CD4-positive, alpha-beta memory T cell (primary cell): ENCODE measurements at regions of chr19 and their contacts with region 1.

Region 1: DNA sequence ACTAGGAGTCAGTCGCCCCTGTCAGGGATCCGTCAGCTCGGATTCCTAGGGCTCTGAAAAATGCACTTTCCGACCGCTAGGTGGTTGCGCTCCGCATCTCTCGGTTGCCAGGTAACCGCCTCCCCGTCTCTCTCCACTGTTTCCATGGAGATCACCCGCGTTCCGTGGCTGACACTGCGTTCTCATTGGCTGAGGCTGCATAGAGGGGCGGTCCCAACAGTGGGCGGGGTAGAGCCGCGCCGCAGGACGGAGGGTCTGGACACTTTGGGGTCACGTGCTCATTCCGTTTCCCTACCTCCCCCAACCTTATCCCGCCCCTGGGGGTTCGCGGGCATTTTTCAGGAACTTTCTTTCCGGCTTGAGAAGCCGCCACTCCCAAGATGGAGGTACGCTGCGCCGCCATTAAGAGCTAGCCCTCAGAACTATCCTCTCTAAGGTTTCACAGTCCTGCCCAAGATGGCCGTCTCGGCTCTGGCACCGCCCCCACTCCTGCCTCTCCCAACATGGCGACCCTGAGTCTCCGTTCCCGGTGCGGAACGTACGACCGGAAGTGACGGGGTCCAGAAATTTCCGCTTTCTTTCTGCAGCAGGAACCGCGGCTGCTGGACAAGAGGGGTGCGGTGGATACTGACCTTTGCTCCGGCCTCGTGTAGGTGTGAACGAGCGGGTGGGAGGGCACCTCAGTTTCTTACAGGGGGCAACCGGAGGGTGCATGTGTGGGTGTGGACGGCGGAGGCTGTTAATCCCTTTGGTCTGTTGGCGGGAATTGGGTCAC is at the starts of genes ODAD3 and PRKCSH:
- DNase-seq: peak; percentile 99
- H3K4me3 ChIP-seq: peak within 1 kb of the TSS; percentile 95 to 97
- H3K4me3 Mint-ChIP-seq: peak within 1 kb of the TSS; percentile 97 to 100 (median 99)
- H3K27ac ChIP-seq: peak within 1 kb of the TSS; percentile 74
- H3K27ac Mint-ChIP-seq: peak within 1 kb of the TSS; percentile 95 to 100 (median 98)
- H3K4me1 ChIP-seq: peaks cover 19% of the 10 kb centered on the region
- H3K4me1 Mint-ChIP-seq: peaks cover 14 to 31% (median 23%) of the 10 kb centered on the region in 4 donors
- H3K27me3 ChIP-seq: no peaks in the 10 kb centered on the region
- H3K27me3 Mint-ChIP-seq: peaks cover 2 to 3% of the 10 kb centered on the region in 2 donors
- total RNA-seq, gene ODAD3: not detected
- total RNA-seq, gene PRKCSH: 300 TPM

Region 2: DNA sequence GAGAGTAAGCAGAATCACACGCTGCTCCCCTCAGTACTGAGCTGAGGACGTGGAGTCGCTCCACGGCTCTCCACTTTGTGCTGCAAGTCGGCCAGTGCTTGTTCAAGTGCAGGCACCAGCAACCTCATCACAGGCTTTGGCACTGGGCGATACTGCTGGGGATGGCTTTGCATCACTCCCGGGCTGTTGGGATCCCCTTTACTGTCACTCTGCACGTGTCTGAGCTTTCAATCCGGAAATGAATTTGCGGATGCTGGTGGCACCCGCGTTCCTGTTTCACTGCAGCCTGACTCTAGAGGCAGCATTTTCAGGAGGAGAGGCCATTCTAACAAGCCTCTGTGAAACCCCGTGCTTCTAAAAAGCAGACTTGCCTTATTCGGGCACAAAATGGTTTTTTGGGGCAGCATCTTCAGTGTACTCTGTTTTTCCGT is 455.3 kb before region 1 on chr19:
- CTCF ChIA-PET with region 1: no interaction called
- POLR2A ChIA-PET with region 1: no interaction called
- intact Hi-C with region 1: no loop called
- DNase-seq: peak in 2 of 5 donors; percentile 6 to 19
- H3K4me3 ChIP-seq: no peak overlapping the region
- H3K4me3 Mint-ChIP-seq: peak overlapping the region in 6 of 8 donors; percentile 29 to 60 (median 50)
- H3K27ac ChIP-seq: no peak overlapping the region
- H3K27ac Mint-ChIP-seq: peak overlapping the region in 6 of 7 donors; percentile 36 to 76 (median 70)
- H3K4me1 ChIP-seq: no peaks in the 10 kb centered on the region
- H3K4me1 Mint-ChIP-seq: peaks cover 14 to 27% (median 21%) of the 10 kb centered on the region in 4 donors
- H3K27me3 ChIP-seq: no peaks in the 10 kb centered on the region
- H3K27me3 Mint-ChIP-seq: no peaks in the 10 kb centered on the region

Region 3: GRCh38 chr19:11346092-11346940 is 88.9 kb before region 1 on chr19 and contains the starts of genes CCDC159 and TMEM205:
- CTCF ChIA-PET with region 1: interaction called, 3 read pairs
- POLR2A ChIA-PET with region 1: no interaction called
- intact Hi-C with region 1: loop called (anchors 1 kb)
- DNase-seq: peak; percentile 97 to 100 (median 99)
- H3K4me3 ChIP-seq: peak within 1 kb of the TSS; percentile 92 to 96
- H3K4me3 Mint-ChIP-seq: peak within 1 kb of the TSS; percentile 95 to 98 (median 97)
- H3K27ac ChIP-seq: peak within 1 kb of the TSS; percentile 88
- H3K27ac Mint-ChIP-seq: peak within 1 kb of the TSS; percentile 80 to 98 (median 95)
- H3K4me1 ChIP-seq: peaks cover 17% of the 10 kb centered on the region
- H3K4me1 Mint-ChIP-seq: peaks cover 17 to 32% (median 25%) of the 10 kb centered on the region in 4 donors
- H3K27me3 ChIP-seq: no peaks in the 10 kb centered on the region
- H3K27me3 Mint-ChIP-seq: no peaks in the 10 kb centered on the region
- total RNA-seq, gene CCDC159: 90.7 to 91.8 TPM
- total RNA-seq, gene TMEM205: 26.1 to 28.5 TPM

Region 4: GRCh38 chr19:11410682-11411081 is 24.6 kb before region 1 on chr19:
- CTCF ChIA-PET with region 1: no interaction called
- POLR2A ChIA-PET with region 1: no interaction called
- intact Hi-C with region 1: no loop called
- DNase-seq: no peak
- H3K4me3 ChIP-seq: no peak overlapping the region
- H3K4me3 Mint-ChIP-seq: no peak overlapping the region
- H3K27ac ChIP-seq: no peak overlapping the region
- H3K27ac Mint-ChIP-seq: no peak overlapping the region
- H3K4me1 ChIP-seq: no peaks in the 10 kb centered on the region
- H3K4me1 Mint-ChIP-seq: no peaks in the 10 kb centered on the region
- H3K27me3 ChIP-seq: no peaks in the 10 kb centered on the region
- H3K27me3 Mint-ChIP-seq: peaks cover 16 to 18% of the 10 kb centered on the region in 2 donors

Region 5: GRCh38 chr19:11482384-11483050 is 47.3 kb after region 1 on chr19:
- CTCF ChIA-PET with region 1: interaction called, 16 read pairs
- POLR2A ChIA-PET with region 1: interaction called, 8 read pairs
- intact Hi-C with region 1: loop called (anchors 1 kb)
- DNase-seq: peak; percentile 79 to 88 (median 85)
- H3K4me3 ChIP-seq: peak overlapping the region in 1 of 2 donors; percentile 35
- H3K4me3 Mint-ChIP-seq: peak overlapping the region; percentile 58 to 75 (median 70)
- H3K27ac ChIP-seq: no peak overlapping the region
- H3K27ac Mint-ChIP-seq: peak overlapping the region in 6 of 7 donors; percentile 8 to 89 (median 74)
- H3K4me1 ChIP-seq: peaks cover 24% of the 10 kb centered on the region
- H3K4me1 Mint-ChIP-seq: peaks cover 8 to 37% (median 20%) of the 10 kb centered on the region in 4 donors
- H3K27me3 ChIP-seq: peaks cover 12% of the 10 kb centered on the region
- H3K27me3 Mint-ChIP-seq: peaks cover 18 to 23% of the 10 kb centered on the region in 2 donors

Region 6: DNA sequence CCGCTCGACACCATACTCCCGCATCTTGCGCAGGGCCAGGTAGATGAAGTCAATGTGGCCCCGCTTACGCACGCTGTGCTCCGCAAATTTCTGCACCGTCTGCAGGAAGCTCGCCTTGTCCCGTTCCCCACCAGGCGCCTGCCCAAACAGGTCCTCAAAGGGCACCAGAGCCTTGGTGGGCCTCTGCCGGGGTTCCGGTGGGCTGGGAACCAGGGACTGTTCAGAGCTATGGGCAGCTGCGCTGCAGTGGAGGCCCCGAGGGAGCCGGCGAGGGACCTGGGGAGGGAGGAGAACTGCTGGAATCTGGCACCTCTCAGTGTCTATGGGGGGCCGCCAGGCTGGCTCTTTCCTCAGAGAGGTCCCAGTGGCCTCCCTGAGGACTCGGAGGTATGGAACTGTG is 78.7 kb after region 1 on chr19:
- CTCF ChIA-PET with region 1: no interaction called
- POLR2A ChIA-PET with region 1: no interaction called
- intact Hi-C with region 1: no loop called
- DNase-seq: no peak
- H3K4me3 ChIP-seq: no peak overlapping the region
- H3K4me3 Mint-ChIP-seq: no peak overlapping the region
- H3K27ac ChIP-seq: no peak overlapping the region
- H3K27ac Mint-ChIP-seq: peak overlapping the region in 1 of 7 donors; percentile 57
- H3K4me1 ChIP-seq: no peaks in the 10 kb centered on the region
- H3K4me1 Mint-ChIP-seq: peaks cover 0 to 3% (median 0%) of the 10 kb centered on the region in 4 donors
- H3K27me3 ChIP-seq: no peaks in the 10 kb centered on the region
- H3K27me3 Mint-ChIP-seq: no peaks in the 10 kb centered on the region

Region 7: DNA sequence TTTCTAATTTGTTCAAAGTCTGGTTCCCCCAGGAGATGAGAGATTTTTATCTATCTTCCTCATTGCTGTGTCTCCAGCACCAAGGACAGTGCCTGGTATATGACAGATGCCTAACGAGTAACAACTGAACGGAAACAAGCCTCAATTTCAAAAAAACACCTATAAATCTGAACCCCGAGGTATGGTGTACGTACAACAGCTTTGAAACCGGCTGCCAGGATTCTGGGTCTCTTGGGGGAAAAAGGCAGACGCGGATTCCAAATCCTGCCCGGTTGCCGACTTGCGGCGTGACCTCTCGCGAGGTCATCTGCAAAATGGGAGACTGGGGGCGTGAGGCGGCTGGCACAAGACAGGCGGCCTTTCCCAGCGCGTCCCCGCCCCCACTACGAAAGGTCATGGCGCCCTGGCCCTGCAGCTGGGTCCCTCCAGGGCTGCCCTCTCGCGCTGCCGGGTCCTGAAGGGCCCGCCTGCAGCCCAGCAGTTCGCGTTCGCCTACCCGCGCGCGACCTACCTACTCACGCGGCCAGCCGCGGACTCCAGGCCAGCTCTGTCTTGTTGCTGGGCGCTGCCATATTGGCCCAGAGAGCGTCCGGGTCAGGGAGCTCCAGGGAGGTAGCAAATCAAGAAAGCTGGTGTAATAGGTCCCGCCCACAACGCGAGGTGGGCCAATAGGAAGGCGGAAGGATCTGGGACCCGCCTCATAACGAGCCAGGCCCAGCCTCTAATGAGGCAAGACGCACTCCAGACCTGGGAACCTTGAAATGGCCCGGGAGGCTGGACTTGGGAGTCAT is 93.5 kb after region 1 on chr19 and contains the start of gene ECSIT:
- CTCF ChIA-PET with region 1: no interaction called
- POLR2A ChIA-PET with region 1: interaction called, 3 read pairs
- intact Hi-C with region 1: loop called (anchors 1 kb)
- DNase-seq: peak; percentile 90 to 95 (median 92)
- H3K4me3 ChIP-seq: peak within 1 kb of the TSS; percentile 70 to 83
- H3K4me3 Mint-ChIP-seq: peak within 1 kb of the TSS; percentile 94 to 99 (median 98)
- H3K27ac ChIP-seq: peak within 1 kb of the TSS; percentile 76
- H3K27ac Mint-ChIP-seq: peak within 1 kb of the TSS; percentile 91 to 98 (median 97)
- H3K4me1 ChIP-seq: peaks cover 15% of the 10 kb centered on the region
- H3K4me1 Mint-ChIP-seq: peaks cover 13 to 21% (median 18%) of the 10 kb centered on the region in 4 donors
- H3K27me3 ChIP-seq: no peaks in the 10 kb centered on the region
- H3K27me3 Mint-ChIP-seq: no peaks in the 10 kb centered on the region
- total RNA-seq, gene ECSIT: 39.5 to 46.2 TPM

Region 8: GRCh38 chr19:11597202-11598102 is 162.2 kb after region 1 on chr19 and contains the start of gene ZNF627:
- CTCF ChIA-PET with region 1: no interaction called
- POLR2A ChIA-PET with region 1: no interaction called
- intact Hi-C with region 1: loop called (anchors 1 kb)
- DNase-seq: peak; percentile 95 to 99 (median 96)
- H3K4me3 ChIP-seq: peak within 1 kb of the TSS; percentile 44 to 87
- H3K4me3 Mint-ChIP-seq: peak within 1 kb of the TSS; percentile 86 to 97 (median 92)
- H3K27ac ChIP-seq: peak within 1 kb of the TSS; percentile 77
- H3K27ac Mint-ChIP-seq: peak within 1 kb of the TSS; percentile 90 to 95 (median 93)
- H3K4me1 ChIP-seq: peaks cover 15% of the 10 kb centered on the region
- H3K4me1 Mint-ChIP-seq: peaks cover 9 to 31% (median 19%) of the 10 kb centered on the region in 4 donors
- H3K27me3 ChIP-seq: no peaks in the 10 kb centered on the region
- H3K27me3 Mint-ChIP-seq: no peaks in the 10 kb centered on the region
- total RNA-seq, gene ZNF627: 11.5 to 12.6 TPM

Region 9: DNA sequence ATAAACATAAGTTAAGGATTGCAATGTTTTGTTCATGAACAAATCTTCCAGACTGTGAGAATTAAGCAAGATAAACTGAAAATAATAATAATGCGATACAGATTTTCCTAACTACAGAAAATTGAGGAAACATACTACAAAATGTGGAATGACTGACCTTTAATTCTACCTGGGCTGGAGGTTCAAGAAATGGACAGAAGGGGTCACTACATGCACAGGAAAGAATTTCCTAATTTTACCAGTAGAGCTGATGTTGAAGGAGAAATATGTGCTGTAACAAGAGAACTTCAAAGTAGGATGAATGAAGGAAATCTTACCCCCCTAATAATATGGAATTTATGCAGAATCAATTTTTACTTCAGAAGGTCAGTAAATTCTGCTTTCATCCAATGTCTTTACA is 224.4 kb after region 1 on chr19:
- CTCF ChIA-PET with region 1: no interaction called
- POLR2A ChIA-PET with region 1: no interaction called
- intact Hi-C with region 1: no loop called
- DNase-seq: no peak
- H3K4me3 ChIP-seq: no peak overlapping the region
- H3K4me3 Mint-ChIP-seq: no peak overlapping the region
- H3K27ac ChIP-seq: no peak overlapping the region
- H3K27ac Mint-ChIP-seq: no peak overlapping the region
- H3K4me1 ChIP-seq: no peaks in the 10 kb centered on the region
- H3K4me1 Mint-ChIP-seq: no peaks in the 10 kb centered on the region
- H3K27me3 ChIP-seq: no peaks in the 10 kb centered on the region
- H3K27me3 Mint-ChIP-seq: peaks cover 0 to 3% of the 10 kb centered on the region in 2 donors